Activated CD4-positive, alpha-beta T cell treated with anti-CD3 and anti-CD28 coated beads for 36 hours (primary cell): ENCODE measurements at regions of chr12 and their contacts with region 1.

Region 1: DNA sequence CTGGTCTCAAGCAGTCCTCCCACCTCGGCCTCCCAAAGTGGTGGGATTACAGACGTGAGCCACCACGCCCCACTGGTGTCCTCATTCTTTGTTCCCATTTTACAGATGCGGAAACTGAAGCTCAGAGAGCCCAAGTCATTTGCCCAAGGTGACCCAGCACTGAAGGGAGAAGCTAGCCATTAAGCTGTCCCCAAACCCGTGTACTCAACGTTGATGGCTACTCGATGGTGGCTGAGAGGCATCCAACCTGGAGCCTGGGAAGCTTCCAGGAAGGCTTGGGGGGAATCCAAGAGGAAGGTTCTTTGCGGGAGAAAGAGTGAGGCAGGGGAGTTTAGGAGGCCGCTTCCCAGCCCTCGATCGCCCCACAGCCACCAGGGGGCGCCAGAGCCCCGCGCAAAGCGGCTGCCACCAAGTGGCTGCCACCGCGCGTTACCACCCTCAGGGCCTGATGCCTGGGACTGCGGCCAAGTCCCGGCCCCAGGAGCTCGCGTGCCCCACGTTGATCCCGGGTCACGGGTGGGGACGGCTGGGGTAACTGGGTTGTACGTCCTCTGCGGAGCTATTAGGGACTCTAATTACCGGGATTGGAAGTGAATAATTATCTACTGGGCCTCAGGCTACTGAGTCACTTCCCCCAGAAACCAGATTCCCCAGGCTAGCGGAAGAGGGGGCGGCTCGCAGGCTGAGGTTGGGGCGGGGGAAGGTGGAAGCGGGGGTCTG is 8.8 kb upstream of the SH2B3 start:
- DNase-seq: peak; percentile 94
- ATAC-seq: peak; percentile 82
- H3K4me3 Mint-ChIP-seq: peak overlapping the region; percentile 61
- H3K27ac Mint-ChIP-seq: peak overlapping the region; percentile 70
- H3K4me1 Mint-ChIP-seq: peaks cover 28% of the 10 kb centered on the region
- H3K27me3 Mint-ChIP-seq: peaks cover 5% of the 10 kb centered on the region

Region 2: DNA sequence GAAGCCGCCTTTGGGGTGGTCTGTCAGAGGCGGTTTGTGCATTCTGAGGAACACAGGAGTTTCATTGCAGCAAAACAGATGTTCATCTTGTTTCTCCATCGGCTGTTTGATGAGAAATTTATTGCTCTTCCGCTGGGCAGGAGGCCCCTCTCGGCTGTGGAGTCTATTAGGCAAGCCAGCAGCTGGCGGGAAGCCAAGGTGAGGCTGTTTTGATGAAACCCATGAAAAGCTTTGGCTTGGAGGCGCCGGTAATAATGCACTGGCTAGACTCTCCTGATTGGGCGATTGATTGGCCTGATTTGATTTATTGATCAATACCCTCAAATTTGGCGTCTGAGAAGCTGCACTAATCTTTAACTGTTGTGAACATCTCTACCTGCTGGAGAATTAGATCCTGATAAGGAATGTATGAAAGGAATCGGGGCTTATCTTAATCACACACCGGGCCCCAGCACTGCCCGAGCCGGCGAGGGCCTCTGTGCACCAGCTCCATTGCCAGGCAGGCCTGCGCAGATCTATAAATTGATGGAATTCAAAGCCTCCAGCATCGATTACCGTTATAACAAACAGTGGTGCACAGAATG is 215.7 kb before region 1 on chr12:
- CTCF ChIA-PET with region 1: no interaction called
- POLR2A ChIA-PET with region 1: no interaction called
- intact Hi-C with region 1: no loop called
- DNase-seq: peak; percentile 21
- ATAC-seq: no peak
- H3K4me3 Mint-ChIP-seq: no peak overlapping the region
- H3K27ac Mint-ChIP-seq: no peak overlapping the region
- H3K4me1 Mint-ChIP-seq: no peaks in the 10 kb centered on the region
- H3K27me3 Mint-ChIP-seq: peaks cover 16% of the 10 kb centered on the region

Region 3: DNA sequence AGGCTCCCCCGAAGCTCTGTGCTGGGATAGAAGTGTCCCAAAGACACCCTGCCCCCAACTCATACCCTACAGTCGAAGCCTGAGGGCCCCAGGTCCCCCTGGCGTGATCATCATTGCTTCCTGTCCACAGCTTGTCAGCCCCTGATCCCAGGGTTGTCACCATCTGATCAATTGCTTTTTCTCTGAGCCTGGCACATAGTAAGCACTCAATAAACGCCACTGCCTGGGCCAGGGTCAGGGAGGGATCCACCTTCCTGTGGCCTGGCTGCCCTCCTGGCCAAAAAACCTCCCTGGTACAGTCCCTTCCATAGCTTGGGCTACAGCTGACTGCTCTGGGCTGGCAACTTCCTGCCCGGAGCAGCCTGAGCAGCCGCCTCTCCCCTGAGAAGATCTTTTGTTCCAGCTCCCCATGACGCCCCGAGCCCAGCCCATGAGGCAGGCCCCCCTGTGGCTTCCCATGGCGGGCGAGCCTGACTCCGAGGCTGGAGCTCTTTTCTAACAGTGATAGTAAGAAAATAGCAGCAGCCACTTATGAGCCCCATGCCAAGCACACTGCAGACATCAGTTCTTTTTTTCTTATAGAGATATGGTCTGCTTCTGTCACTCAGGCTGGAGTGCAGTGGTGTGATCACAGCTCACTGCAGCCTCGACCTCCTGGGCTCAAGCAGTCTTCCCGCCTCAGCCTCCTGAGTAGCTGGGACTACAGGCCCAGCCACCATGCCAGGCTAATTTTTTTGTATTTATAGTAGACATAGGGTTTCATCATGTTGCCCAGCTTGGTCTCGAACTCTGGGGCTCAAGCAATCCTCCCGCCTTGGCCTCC is 15.3 kb after region 1 on chr12:
- CTCF ChIA-PET with region 1: interaction called, 17 read pairs
- POLR2A ChIA-PET with region 1: no interaction called
- intact Hi-C with region 1: no loop called
- DNase-seq: peak; percentile 27
- ATAC-seq: peak; percentile 20
- H3K4me3 Mint-ChIP-seq: no peak overlapping the region
- H3K27ac Mint-ChIP-seq: peak overlapping the region; percentile 79
- H3K4me1 Mint-ChIP-seq: peaks cover 79% of the 10 kb centered on the region
- H3K27me3 Mint-ChIP-seq: no peaks in the 10 kb centered on the region

Region 4: DNA sequence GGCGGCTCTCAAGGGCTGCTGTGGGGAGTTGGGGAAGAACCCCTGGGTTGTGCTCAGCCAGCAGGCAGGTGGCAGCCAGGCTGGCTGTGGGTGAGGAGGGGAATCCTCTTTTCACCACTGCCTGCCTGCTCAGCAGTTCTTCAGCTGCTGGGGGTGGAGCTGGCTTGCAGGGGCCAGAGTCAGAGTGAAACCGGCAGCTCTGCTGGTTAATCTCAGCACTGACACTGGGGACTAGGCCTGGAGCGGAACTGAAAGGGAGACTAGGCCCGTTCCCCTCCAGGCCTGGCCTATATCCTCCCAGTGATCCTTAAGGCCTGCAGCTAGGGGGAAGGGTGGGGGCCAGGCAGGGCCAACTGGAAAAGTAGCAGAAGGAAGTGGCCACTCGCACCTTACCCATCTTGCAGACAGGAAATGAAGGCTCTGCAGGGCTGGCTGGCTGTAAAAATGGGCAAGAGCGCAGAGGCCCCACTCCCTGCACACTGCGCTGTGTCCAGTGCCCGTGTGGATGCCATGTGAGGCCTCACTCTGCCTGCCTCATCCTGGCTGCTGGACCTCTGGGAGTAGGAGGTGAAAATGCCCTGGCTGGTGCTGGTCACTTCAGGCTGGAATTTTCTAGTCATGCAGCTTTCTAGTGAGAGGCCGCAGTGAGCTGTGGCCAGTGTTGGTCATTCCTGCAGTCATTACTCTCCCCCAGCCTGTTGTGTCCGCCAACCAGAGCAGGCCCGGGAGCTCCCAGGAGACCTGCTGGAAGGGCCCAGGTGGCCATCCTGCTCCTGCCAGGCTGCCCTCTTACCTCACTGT is 48.2 kb after region 1 on chr12:
- CTCF ChIA-PET with region 1: interaction called, 890 read pairs
- POLR2A ChIA-PET with region 1: interaction called, 4 read pairs
- intact Hi-C with region 1: loop called in 1 of 2 experiments (anchors 1 kb)
- DNase-seq: peak; percentile 95
- ATAC-seq: peak; percentile 94
- H3K4me3 Mint-ChIP-seq: peak overlapping the region; percentile 17
- H3K27ac Mint-ChIP-seq: peak overlapping the region; percentile 70
- H3K4me1 Mint-ChIP-seq: peaks cover 63% of the 10 kb centered on the region
- H3K27me3 Mint-ChIP-seq: no peaks in the 10 kb centered on the region

Region 5: DNA sequence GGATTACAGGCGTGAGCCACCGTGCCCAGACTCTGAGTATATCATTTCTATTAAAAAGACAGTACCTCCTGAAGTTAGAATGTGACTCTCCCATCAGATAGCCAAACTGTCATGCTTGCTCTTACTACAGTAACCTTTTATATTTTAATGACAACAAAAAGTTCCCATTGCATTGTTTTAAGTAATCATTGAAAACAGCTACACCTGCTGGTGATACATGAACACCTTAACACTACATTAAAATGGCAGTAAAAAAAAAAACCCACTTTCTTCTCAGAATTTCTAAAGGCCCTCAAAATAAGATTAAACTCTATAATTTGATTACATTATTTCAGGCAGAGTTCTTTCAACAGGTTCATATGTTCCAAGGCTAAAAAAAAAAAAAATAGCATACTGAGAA is 85.6 kb after region 1 on chr12:
- CTCF ChIA-PET with region 1: interaction called, 18 read pairs
- POLR2A ChIA-PET with region 1: no interaction called
- intact Hi-C with region 1: loop called in 1 of 2 experiments (anchors 1 kb)
- DNase-seq: no peak
- ATAC-seq: no peak
- H3K4me3 Mint-ChIP-seq: no peak overlapping the region
- H3K27ac Mint-ChIP-seq: no peak overlapping the region
- H3K4me1 Mint-ChIP-seq: no peaks in the 10 kb centered on the region
- H3K27me3 Mint-ChIP-seq: no peaks in the 10 kb centered on the region

Region 6: GRCh38 chr12:111656016-111656415 is 259.1 kb after region 1 on chr12:
- CTCF ChIA-PET with region 1: no interaction called
- POLR2A ChIA-PET with region 1: no interaction called
- intact Hi-C with region 1: no loop called
- DNase-seq: no peak
- ATAC-seq: no peak
- H3K4me3 Mint-ChIP-seq: no peak overlapping the region
- H3K27ac Mint-ChIP-seq: no peak overlapping the region
- H3K4me1 Mint-ChIP-seq: no peaks in the 10 kb centered on the region
- H3K27me3 Mint-ChIP-seq: no peaks in the 10 kb centered on the region

Region 7: DNA sequence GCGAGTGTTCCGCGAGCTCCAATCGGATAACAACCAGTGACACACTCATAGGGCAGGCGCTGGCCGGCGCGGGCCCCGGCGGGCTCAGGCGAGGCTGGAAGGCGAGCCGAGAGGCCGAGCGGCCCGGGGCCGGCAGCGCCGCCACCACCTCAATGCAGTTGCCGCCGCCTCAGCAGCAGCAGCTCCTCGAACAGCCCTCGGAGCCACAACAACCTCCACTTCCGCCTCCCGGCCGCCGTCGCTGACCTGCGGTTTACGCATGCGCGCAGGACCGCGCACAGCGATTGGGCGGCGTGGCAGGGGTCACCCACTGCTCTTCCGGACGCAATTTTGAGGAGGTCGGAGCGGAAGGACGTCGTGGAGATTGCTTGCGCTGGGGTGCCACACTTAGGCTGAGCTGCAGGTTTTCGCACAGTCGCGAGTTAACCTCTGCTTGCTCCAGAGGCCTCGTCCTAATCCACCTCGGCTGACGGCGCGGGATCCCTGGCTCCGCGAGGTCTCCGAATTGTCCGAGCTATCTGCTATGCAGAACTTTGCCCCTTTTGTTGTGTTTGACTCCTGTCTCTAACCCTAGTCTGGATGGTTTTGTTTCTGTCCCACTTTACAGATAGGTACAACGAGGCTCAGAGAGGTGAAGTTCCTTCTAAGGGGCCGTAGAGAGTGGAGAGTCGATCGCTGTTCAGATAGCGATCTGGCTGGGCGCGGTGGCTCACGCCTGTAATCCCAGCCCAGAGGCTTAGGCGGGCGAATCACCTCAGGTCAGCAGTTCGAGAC is 289.0 kb after region 1 on chr12 and contains the starts of genes ACAD10 and BRAP:
- CTCF ChIA-PET with region 1: interaction called, 4 read pairs
- POLR2A ChIA-PET with region 1: interaction called, 3 read pairs
- intact Hi-C with region 1: loop called (anchors 2 to 5 kb)
- DNase-seq: peak; percentile 95
- ATAC-seq: peak; percentile 97
- H3K4me3 Mint-ChIP-seq: peak within 1 kb of the TSS; percentile 89
- H3K27ac Mint-ChIP-seq: peak within 1 kb of the TSS; percentile 91
- H3K4me1 Mint-ChIP-seq: peaks cover 31% of the 10 kb centered on the region
- H3K27me3 Mint-ChIP-seq: no peaks in the 10 kb centered on the region
- total RNA-seq, gene ACAD10: 25.5 to 27.5 TPM
- total RNA-seq, gene BRAP: 18.3 to 23.6 TPM

Region 8: DNA sequence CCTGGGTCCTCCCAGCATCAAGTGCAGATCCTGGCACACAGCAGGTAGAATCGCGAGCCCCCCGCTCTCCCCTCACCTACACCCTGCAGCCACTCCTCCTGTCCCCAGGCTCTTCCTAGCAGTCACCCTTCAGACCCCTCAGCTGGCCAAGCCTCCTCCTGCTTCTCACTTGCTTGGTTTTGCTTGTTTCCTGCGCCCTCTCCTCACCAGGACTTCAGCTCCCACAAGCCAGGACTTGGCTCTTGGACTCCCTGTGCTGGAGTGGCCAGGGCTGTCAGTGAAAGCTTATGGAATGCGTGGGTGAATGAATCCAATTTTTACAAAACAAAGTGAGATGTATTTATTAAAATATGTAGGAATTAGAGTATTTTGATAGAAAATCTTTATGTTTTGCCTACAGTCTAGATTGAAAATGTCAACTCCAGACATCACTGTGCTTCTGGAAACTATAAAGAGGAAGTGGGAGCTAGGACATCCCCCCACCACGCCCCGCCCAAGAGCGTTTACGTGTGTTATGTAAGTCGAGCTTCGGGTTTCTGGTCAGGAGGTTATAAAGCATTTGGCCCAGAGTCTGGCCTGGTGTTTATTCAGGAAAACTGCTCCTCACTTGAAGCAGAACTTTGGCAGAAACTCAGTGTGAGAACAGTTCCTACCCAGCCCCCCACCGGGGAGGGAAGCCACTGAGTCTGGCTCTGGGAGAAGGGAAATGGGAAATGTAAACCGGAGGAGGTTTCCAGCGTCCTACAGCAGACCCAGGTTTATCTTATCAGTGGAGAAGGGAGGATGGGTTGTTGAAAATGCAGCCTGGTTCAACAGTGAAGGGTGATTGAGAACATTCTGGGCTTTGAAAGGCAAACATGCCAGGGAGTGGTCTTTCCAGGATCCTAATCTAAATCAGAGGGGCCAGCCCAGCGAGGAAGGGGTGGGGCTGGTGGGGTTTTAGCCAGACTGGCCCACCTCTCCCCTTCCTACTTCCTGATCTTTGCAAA is 378.6 kb after region 1 on chr12:
- CTCF ChIA-PET with region 1: no interaction called
- POLR2A ChIA-PET with region 1: no interaction called
- intact Hi-C with region 1: no loop called
- DNase-seq: no peak
- ATAC-seq: no peak
- H3K4me3 Mint-ChIP-seq: no peak overlapping the region
- H3K27ac Mint-ChIP-seq: no peak overlapping the region
- H3K4me1 Mint-ChIP-seq: peaks cover 3% of the 10 kb centered on the region
- H3K27me3 Mint-ChIP-seq: no peaks in the 10 kb centered on the region